ENCODE measurements at regions of chr12 and their contacts with region 1.

Region 1: DNA sequence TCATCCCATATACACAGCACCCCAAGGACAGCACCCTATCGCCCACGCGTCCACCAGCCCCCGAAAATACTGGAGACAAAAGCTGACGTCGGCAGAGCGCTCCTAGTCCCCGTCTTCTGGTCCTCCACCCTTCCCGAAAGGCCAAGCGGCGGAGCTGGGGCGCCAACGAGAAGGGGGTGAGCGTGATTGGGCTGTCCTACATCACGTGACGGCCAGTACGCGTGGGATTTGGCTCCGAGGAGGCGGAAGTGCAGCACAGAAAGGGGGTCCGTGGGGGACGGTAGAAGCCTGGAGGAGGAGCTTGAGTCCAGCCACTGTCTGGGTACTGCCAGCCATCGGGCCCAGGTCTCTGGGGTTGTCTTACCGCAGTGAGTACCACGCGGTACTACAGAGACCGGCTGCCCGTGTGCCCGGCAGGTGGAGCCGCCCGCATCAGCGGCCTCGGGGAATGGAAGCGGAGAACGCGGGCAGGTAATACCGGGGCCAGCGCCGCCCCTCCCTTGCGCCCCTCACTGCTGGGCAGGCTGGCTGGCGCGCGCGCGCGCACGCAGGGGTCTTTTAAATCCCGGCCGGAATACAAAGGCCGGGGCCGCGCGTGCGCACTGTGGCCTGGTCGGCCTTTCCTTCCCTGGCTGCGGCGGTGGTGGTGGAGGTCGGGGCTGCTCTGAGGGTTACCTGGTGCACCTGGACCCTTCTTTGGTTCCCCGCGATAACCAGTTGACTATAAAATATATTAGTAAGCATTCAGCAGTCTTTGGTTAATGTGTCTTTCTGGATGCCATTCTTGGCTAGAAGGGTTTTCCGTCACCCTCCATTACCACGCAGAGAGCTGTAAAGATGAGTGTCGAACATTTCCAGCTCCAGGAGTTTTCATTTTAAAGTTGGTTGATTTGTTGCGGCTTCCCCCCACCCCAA is at the start of gene TDG:
- DNase-seq: peak; percentile 97 to 100 (median 99)

Region 2: GRCh38 chr12:103930034-103930786 is 35.6 kb before region 1 on chr12 and contains the start of gene HSP90B1:
- intact Hi-C with region 1: loop called (anchors 5 kb)
- DNase-seq: peak; percentile 96 to 100 (median 99)

Region 3: DNA sequence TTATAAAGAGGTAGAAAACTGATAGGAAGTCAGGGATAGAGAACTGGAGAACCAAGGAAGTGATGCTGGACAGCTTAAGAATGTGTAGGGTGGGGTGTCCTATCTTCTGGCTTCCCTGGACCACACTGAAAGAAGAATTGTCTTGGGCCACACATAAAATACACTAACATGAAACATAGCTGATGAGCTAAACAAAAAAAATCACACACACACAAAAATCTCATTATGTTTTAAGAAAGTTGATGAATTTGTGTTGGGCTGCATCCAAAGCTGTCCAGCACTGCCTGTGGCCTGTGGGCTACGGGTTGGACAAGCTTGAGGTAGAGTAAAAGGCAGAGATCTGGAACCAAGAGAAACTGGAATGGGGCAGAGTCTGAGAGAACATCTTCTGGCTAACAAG is 76.7 kb after region 1 on chr12:
- intact Hi-C with region 1: no loop called
- DNase-seq: no peak

Region 4: DNA sequence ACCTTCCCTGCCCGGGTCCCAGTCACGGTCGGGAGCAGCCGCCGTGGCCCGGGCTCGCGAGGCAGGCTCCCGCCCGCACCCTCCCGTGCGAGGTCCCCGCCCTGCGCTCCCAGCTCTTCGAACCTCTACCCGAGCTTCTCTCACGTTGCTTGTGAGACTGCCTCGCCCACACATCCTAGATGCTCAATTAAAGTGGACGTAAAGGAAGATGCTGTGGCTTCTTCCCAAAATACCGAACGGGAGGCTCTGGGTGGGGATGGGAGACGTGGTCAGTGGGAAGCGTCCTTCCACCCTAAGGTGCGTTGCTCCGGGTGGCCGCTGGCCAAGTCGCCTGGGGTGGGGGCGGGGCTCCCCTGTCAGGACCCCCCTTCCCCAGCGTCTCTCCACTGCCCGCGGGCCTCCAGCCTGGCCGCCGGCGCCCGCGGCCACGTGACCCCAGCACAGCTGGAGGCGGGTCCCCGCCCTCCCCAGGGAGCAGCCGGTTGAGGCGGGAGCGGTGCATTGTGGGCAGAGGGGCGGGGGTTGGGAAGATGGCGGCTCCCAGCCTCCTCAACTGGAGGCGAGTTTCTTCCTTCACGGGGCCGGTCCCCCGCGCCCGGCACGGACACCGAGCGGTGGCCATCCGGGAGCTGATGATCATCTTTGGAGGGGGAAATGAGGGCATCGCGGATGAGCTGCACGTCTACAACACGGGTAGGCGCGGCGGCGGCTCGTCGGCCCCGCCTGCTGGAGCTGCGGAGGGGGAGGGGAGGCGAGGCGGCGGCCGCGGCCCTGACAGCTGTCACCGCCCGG is 98.4 kb after region 1 on chr12 and contains the start of gene HCFC2:
- intact Hi-C with region 1: loop called (anchors 5 kb)
- DNase-seq: peak; percentile 78 to 98 (median 94)

Region 5: DNA sequence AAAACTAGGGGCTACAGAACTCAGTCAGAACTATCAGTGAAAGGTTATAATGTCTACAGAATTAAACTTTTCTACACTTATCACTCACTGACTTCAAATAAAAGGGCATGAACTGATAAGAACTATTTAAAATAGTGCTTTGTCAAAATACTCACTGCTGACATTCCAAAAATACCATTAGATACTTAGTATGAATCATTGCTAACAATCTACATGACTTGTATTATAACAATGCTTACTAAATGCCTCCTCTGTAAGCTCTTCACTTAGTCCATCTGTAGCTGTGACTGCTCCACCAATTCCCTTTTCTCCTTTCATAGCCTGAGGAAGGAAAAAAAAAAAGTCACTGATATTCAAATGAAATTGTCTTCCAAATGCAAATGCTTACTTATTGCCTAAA is 155.2 kb after region 1 on chr12:
- intact Hi-C with region 1: no loop called
- DNase-seq: no peak

Region 6: GRCh38 chr12:104154286-104154685 is 188.4 kb after region 1 on chr12:
- intact Hi-C with region 1: no loop called
- DNase-seq: no peak

Region 7: GRCh38 chr12:104189915-104190555 is 224.2 kb after region 1 on chr12:
- intact Hi-C with region 1: no loop called
- DNase-seq: peak in 3 of 42 donors; percentile 27 to 40 (median 40)